Activated CD4-positive, alpha-beta memory T cell treated with anti-CD3 and anti-CD28 coated beads for 36 hours (primary cell): ENCODE measurements at regions of chr12 and their contacts with region 1.

Region 1: DNA sequence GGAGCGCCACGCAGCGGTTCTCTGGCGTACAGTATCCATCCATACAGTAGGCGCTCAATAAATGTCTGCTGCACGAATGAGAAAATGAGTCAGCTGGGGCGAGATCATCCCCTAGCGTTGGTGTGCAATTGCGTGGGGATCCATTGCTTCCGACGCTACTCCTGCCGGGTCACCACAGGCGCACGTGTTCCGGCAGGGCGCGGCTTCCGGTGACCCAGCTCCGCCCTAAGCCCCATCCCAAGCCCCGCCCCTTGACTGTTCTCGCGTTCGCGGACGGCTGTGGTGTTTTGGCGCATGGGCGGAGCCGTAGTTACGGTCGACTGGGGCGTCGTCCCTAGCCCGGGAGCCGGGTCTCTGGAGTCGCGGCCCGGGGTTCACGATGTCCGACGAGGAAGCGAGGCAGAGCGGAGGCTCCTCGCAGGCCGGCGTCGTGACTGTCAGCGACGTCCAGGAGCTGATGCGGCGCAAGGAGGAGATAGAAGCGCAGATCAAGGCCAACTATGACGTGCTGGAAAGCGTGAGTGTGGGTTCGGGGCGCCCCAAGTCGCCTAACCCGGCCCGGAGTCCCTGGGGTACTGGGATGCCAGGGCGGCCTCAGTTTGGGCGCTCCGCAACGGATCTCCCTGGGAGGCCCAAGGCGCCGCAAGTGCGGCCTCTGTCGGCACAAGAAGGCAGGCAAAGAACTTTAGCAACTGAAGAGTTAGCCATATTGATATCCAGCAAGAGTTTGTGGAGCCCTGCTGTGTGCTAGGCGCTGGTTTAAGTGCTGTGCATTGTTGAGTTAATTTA is at the start of gene PSMD9:
- DNase-seq: peak; percentile 99
- H3K4me3 Mint-ChIP-seq: peak within 1 kb of the TSS; percentile 100
- H3K27ac Mint-ChIP-seq: peak within 1 kb of the TSS; percentile 94
- H3K4me1 Mint-ChIP-seq: peaks cover 39% of the 10 kb centered on the region
- H3K27me3 Mint-ChIP-seq: no peaks in the 10 kb centered on the region
- total RNA-seq, gene PSMD9: 60.7 to 64.1 TPM

Region 2: GRCh38 chr12:121399391-121400331 is 489.0 kb before region 1 on chr12 and contains the start of gene RNF34:
- CTCF ChIA-PET with region 1: no interaction called
- POLR2A ChIA-PET with region 1: no interaction called
- intact Hi-C with region 1: loop called (anchors 1 kb)
- DNase-seq: peak; percentile 99
- H3K4me3 Mint-ChIP-seq: peak within 1 kb of the TSS; percentile 94
- H3K27ac Mint-ChIP-seq: peak within 1 kb of the TSS; percentile 96
- H3K4me1 Mint-ChIP-seq: peaks cover 33% of the 10 kb centered on the region
- H3K27me3 Mint-ChIP-seq: no peaks in the 10 kb centered on the region
- total RNA-seq, gene RNF34: 70.4 to 72.5 TPM

Region 3: GRCh38 chr12:121688966-121689365 is 199.7 kb before region 1 on chr12:
- CTCF ChIA-PET with region 1: interaction called, 4 read pairs
- POLR2A ChIA-PET with region 1: no interaction called
- intact Hi-C with region 1: loop called (anchors 1 kb)
- DNase-seq: no peak
- H3K4me3 Mint-ChIP-seq: no peak overlapping the region
- H3K27ac Mint-ChIP-seq: no peak overlapping the region
- H3K4me1 Mint-ChIP-seq: peaks cover 6% of the 10 kb centered on the region
- H3K27me3 Mint-ChIP-seq: no peaks in the 10 kb centered on the region

Region 4: DNA sequence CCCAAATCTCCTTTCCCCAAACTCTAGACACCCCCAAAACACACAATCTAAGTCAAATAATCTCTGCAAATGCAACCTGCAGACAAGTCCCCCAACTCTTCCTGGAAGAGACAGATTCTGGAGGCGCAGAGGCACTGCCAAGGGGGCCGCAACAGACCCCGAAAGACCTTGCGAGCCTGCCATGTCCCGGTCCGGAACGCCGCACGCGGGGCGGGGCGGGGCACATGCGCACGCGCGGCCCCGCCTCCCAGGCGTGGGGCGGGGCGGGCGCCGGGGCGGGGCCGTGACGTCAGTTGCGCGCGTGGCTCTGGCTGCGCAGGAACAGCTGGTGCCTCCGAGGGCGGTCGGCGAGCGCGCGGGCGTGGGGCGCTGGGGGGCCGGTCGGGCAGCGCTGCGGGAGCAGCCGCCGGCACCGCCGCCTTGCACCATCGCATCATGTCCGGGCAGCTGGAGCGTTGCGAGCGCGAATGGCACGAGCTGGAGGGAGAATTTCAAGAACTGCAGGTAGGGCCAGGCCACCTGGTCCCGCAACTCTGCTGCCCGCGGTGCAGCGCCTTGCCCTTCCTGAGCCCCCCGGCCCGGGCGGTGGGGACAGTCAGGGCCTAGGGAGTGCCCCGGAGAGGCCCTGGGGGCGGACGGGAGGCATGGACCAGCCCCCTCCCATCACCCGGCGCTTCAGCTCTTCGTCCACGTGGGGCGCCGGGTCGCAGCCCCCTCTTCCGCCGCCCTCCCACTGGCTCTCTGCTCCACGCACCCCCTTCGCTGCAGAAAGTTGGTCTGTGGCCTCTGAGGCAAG is 176.0 kb before region 1 on chr12 and contains the start of gene TMEM120B:
- CTCF ChIA-PET with region 1: interaction called, 11 read pairs
- POLR2A ChIA-PET with region 1: interaction called, 3 read pairs
- intact Hi-C with region 1: loop called (anchors 5 kb)
- DNase-seq: peak; percentile 86
- H3K4me3 Mint-ChIP-seq: peak within 1 kb of the TSS; percentile 89
- H3K27ac Mint-ChIP-seq: peak within 1 kb of the TSS; percentile 59
- H3K4me1 Mint-ChIP-seq: peaks cover 16% of the 10 kb centered on the region
- H3K27me3 Mint-ChIP-seq: no peaks in the 10 kb centered on the region
- total RNA-seq, gene TMEM120B: 8.8 to 9.5 TPM

Region 5: DNA sequence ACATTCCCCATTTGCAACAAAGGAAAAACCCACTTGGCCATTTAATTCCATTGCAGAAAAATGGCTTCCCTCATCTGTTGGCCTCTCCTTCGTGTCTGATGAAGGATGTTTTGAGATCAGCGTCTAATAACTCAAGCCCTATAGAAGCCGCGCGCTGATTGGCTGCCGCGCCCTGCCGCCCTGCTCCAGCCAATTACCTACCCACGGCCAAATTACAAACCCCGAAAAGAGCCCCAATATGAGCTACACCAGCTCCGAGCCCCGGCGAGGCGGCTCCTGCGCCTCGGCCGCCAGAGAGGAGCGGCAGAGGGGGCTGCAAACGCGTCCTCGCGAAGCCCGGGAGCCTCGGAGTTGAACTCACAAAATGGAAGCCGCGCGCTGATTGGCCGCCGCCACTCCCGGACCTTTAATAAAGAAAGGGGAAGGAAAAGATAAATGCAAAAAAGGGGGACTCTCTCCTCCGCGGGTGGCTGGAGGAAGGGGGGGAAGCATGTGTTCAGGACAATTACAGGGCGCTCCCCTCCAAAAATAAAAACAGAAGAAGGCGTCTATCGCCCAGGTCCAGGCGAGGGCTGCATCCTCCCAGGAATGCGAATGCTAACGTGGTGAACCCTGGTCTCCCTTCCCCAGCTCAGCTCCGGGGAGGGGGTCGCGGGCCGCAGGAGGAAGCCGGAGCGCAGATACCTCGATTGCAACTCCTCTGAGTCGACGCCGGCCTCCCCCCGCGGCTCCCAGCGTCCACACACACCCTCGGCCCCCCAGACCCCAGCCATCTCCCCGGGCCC is 85.6 kb before region 1 on chr12:
- CTCF ChIA-PET with region 1: interaction called, 46 read pairs
- POLR2A ChIA-PET with region 1: interaction called, 7 read pairs
- intact Hi-C with region 1: loop called (anchors 1 kb)
- DNase-seq: peak; percentile 93
- H3K4me3 Mint-ChIP-seq: peak overlapping the region; percentile 91
- H3K27ac Mint-ChIP-seq: peak overlapping the region; percentile 99
- H3K4me1 Mint-ChIP-seq: peaks cover 30% of the 10 kb centered on the region
- H3K27me3 Mint-ChIP-seq: no peaks in the 10 kb centered on the region

Region 6: GRCh38 chr12:121839106-121839992 is 49.3 kb before region 1 on chr12:
- CTCF ChIA-PET with region 1: interaction called, 13 read pairs
- POLR2A ChIA-PET with region 1: interaction called, 3 read pairs
- intact Hi-C with region 1: loop called (anchors 1 kb)
- DNase-seq: peak; percentile 100
- H3K4me3 Mint-ChIP-seq: peak overlapping the region; percentile 99
- H3K27ac Mint-ChIP-seq: peak overlapping the region; percentile 92
- H3K4me1 Mint-ChIP-seq: peaks cover 15% of the 10 kb centered on the region
- H3K27me3 Mint-ChIP-seq: no peaks in the 10 kb centered on the region

Region 7: DNA sequence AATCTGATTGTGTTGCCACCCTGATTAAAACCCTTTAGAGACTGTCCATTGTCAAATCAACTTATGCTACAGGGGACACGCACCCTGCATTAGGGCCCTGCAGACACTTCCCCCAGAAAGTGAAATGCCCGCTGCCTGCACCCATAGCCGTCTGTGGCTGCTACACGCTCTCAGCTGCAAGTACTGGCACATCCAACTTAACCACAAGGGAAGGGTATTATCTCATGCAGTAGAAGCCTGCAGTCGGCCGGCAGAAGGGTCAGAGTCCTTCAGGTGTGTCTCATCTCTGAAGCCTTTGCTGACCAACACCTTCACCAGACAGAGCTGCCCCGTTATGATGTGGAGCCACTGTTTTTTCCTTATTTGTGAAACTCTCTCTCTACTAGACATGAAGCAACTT is 50.5 kb after region 1 on chr12:
- CTCF ChIA-PET with region 1: no interaction called
- POLR2A ChIA-PET with region 1: no interaction called
- intact Hi-C with region 1: no loop called
- DNase-seq: no peak
- H3K4me3 Mint-ChIP-seq: no peak overlapping the region
- H3K27ac Mint-ChIP-seq: no peak overlapping the region
- H3K4me1 Mint-ChIP-seq: no peaks in the 10 kb centered on the region
- H3K27me3 Mint-ChIP-seq: no peaks in the 10 kb centered on the region

Region 8: DNA sequence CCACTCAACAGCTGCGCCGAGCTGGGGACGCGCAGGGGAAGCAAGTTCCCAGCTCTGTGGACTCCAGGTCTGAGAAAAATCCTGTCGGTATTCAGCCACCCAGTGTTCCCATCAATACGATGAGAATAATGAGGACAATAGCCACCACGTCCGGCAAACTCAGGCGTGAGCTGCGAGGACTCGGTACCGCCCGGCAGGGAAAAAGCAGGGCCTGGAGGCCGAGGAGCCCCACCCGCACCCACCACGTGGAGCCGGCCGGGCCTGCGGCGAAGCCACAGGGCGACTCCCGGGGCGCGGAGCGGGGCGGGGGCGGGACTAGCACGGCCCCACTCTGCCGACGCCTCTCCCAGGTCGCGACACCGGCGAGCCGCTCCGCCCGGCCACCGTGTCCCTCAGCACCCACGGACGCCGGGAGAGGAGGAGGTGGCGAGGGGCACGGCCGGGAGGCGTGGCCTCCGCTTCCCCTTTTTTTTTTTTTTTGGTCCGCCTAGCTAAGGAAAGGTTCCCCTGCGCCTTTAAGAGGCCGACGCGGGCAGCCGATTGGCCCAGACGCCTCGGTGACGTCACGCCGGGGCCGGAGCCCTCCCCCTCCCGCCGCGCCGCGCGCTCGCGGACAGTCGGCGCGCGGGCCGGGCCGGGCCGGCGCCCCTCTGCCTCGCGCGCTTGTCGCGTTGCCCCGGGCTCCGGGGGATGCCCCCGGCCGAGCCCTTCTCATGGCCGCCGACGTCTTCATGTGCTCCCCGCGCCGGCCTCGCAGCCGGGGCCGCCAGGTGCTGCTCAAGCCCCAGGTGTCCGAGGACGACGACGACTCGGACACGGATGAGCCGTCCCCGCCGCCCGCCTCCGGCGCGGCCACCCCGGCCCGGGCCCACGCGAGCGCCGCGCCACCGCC is 189.7 kb after region 1 on chr12 and contains the start of gene MLXIP:
- CTCF ChIA-PET with region 1: no interaction called
- POLR2A ChIA-PET with region 1: no interaction called
- intact Hi-C with region 1: loop called (anchors 2 kb)
- DNase-seq: peak; percentile 93
- H3K4me3 Mint-ChIP-seq: peak within 1 kb of the TSS; percentile 83
- H3K27ac Mint-ChIP-seq: peak within 1 kb of the TSS; percentile 8
- H3K4me1 Mint-ChIP-seq: peaks cover 45% of the 10 kb centered on the region
- H3K27me3 Mint-ChIP-seq: no peaks in the 10 kb centered on the region
- total RNA-seq, gene MLXIP: 17.5 to 19.6 TPM